GM12878 (cell line): ENCODE measurements at regions of chr7 and their contacts with region 1.

Region 1: DNA sequence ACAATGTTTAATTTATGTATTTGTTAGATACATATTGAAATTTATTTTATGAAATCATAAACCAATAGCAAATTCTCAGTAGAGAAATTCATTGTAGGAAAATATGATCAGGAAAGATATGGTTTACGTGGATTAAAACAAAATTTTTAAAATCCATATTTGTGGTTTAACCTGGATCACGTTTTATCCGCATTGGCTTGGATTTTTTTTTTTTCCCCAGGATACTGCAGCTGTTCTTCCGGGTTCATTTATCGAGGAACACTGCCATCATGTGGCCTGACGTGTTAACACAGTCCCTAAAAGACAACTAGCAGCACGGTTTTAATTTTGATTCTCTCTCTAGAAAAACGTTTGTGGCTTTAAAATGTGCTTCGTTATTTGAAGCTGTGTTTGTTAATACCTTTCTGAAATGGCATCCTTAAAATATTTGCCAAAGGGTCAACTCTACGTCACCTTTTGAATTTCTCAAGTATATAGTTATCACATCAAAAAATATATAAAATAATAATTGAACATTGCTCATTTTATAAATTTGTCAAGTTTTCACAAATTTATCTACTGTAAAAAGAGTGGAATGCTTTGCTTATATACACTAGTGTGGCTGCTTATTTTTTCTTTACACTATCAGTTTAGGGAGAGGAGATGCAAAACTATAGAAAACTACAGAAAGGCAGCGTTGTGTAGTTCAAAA is 8.7 kb upstream of the ASB4 start:
- DNase-seq: peak; percentile 28
- ATAC-seq: peak; percentile 73
- H3K4me3 ChIP-seq: no peak overlapping the region
- H3K27ac ChIP-seq: no peak overlapping the region
- H3K4me1 ChIP-seq: peaks cover 4% of the 10 kb centered on the region
- H3K27me3 ChIP-seq: no peaks in the 10 kb centered on the region
- CTCF ChIP-seq: peak; percentile 69 to 86 (median 74)
- EP300 ChIP-seq: no peak
- POLR2A ChIP-seq: no peak
- RAD21 ChIP-seq: peak; percentile 94

Region 2: DNA sequence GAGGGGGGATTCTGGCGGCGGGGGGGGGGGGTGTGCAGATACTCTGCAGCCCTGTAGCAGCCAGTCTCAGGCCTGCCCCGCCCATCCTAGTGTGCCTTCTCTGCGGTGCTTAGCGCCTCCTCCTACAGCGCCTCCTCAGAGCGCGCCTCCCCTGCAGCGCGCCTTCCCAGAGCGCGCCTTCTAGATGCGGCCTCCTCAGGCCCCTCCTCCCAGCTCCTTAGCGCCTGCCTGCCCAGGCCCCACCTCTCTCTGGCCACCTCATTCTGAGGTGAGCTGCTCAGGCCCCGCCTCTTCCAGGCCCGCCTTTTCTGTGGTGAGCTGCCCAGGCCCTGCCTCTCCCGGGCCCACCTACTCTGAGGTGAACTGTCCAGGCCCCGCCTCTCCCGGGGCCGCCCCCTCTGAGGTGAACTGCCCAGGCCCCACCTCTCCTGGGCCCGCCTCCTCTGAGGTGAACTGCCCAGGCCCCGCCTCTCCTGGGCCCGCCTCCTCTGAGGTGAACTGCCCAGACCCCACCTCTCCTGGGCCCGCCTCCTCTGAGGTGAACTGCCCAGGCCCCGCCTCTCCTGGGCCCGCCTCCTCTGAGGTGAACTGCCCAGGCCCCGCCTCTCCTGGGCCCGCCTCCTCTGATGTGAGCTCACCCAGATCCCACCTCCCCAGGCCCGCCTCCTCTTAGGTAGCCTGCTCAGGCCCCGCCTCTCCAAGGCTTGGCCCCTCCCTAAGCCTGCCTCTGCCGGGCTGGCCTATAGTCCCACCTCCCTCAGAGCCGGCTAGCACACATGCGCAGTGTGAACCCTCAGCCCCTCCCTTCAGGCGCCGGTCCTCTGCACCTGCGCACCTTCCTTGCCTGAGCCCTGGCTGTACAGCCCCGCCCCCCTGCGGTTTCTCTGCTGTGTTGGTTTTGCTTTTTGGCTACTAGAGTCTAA is 819.0 kb before region 1 on chr7:
- CTCF ChIA-PET with region 1: interaction called, 6 read pairs
- POLR2A ChIA-PET with region 1: no interaction called
- RAD21 ChIA-PET with region 1: interaction called, 14 read pairs
- SMC1A ChIA-PET with region 1: interaction called, 10 read pairs
- in situ Hi-C with region 1: no loop called
- intact Hi-C with region 1: loop called (anchors 10 kb)
- DNase-seq: peak; percentile 83
- ATAC-seq: peak; percentile 88
- H3K4me3 ChIP-seq: no peak overlapping the region
- H3K27ac ChIP-seq: no peak overlapping the region
- H3K4me1 ChIP-seq: no peaks in the 10 kb centered on the region; the same call in 1 of the 2 replicates
- H3K27me3 ChIP-seq: no peaks in the 10 kb centered on the region
- CTCF ChIP-seq: peak in 1 of 3 experiments; percentile 16; a peak in 1 of 6 replicates
- EP300 ChIP-seq: no peak
- POLR2A ChIP-seq: peak; percentile 56; the same call in 1 of the 2 replicates
- RAD21 ChIP-seq: no peak

Region 3: DNA sequence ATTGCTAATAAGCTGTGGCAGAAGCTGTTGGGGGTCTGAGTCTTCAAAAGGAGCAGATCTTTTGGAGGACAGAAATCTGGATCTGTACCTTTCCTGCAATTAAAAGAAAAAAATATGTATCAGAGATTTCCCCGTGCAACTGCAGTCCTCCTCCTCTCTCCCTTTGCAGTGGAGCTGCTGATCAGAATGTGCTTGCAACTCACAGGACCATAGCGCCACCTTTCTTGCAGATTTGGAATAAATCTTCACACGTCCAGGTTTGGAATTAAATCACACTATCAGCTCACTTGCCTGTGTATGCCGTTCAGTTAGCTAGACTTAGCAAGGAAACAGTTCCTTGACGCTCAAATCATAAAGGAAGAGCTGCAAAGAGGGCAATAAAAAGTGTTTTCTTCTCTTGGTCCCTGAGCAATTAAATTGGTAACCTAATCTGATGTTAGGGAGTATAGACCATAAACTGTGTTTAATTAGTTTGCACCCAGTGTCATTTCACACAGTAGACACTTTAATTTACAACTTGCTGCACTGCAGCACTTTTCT is 230.1 kb before region 1 on chr7:
- CTCF ChIA-PET with region 1: interaction called, 36 read pairs
- POLR2A ChIA-PET with region 1: no interaction called
- RAD21 ChIA-PET with region 1: interaction called, 38 read pairs
- SMC1A ChIA-PET with region 1: interaction called, 56 read pairs
- in situ Hi-C with region 1: no loop called
- intact Hi-C with region 1: no loop called
- DNase-seq: peak; percentile 5
- ATAC-seq: peak; percentile 91
- H3K4me3 ChIP-seq: no peak overlapping the region
- H3K27ac ChIP-seq: no peak overlapping the region
- H3K4me1 ChIP-seq: no peaks in the 10 kb centered on the region
- H3K27me3 ChIP-seq: no peaks in the 10 kb centered on the region
- CTCF ChIP-seq: peak; percentile 57 to 75 (median 65)
- EP300 ChIP-seq: no peak
- POLR2A ChIP-seq: no peak
- RAD21 ChIP-seq: peak; percentile 82

Region 4: GRCh38 chr7:95357623-95358022 is 119.4 kb before region 1 on chr7:
- CTCF ChIA-PET with region 1: interaction called, 14 read pairs
- POLR2A ChIA-PET with region 1: no interaction called
- RAD21 ChIA-PET with region 1: interaction called, 6 read pairs
- SMC1A ChIA-PET with region 1: interaction called, 5 read pairs
- in situ Hi-C with region 1: no loop called
- intact Hi-C with region 1: no loop called
- DNase-seq: no peak
- ATAC-seq: no peak
- H3K4me3 ChIP-seq: no peak overlapping the region
- H3K27ac ChIP-seq: no peak overlapping the region
- H3K4me1 ChIP-seq: no peaks in the 10 kb centered on the region
- H3K27me3 ChIP-seq: no peaks in the 10 kb centered on the region
- CTCF ChIP-seq: 0 out of 6 replicates have a peak, but pooled peaks of 1 of the 3 experiments have one; percentile 7
- EP300 ChIP-seq: no peak
- POLR2A ChIP-seq: no peak
- RAD21 ChIP-seq: peak; percentile 25; the same call in 1 of the 2 replicates

Region 5: GRCh38 chr7:95427166-95427565 is 49.9 kb before region 1 on chr7:
- CTCF ChIA-PET with region 1: interaction called, 50 read pairs
- POLR2A ChIA-PET with region 1: interaction called, 4 read pairs
- RAD21 ChIA-PET with region 1: interaction called, 33 read pairs
- SMC1A ChIA-PET with region 1: interaction called, 81 read pairs
- in situ Hi-C with region 1: no loop called
- intact Hi-C with region 1: no loop called
- DNase-seq: no peak
- ATAC-seq: no peak
- H3K4me3 ChIP-seq: no peak overlapping the region
- H3K27ac ChIP-seq: no peak overlapping the region
- H3K4me1 ChIP-seq: no peaks in the 10 kb centered on the region
- H3K27me3 ChIP-seq: no peaks in the 10 kb centered on the region
- CTCF ChIP-seq: no peak
- EP300 ChIP-seq: no peak
- POLR2A ChIP-seq: no peak
- RAD21 ChIP-seq: no peak

Region 6: DNA sequence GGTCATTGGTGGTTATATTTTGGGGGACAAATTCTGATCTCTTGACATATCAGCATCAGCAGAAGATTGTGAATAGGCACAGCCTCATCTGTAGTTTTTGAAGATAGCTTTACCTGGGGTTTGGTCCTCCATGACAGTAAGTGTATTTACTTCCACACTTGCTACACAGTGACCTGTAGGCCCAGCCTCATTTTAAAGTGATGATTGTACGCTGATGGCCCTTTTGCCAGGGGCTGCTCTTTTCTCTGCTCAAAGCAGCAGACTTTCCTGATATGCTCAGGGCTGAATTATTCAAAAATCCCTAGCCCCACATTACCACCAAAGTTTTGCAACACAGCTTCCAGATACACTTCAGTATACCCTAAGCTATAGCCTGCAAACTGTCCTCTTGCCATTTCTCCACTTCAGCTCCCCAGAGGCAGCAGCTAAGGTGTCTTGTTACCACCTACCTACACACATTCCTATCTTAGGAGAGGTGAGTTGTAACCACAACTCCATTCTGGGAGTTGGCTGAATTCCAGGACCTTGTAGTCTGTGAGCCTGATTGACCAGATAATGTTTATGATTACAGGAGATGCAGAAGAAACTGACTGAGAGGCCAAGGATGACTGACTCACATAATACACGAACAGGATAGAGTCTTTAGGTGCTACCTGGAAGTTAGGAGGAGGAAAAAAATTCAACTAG is 14.7 kb after region 1 on chr7:
- CTCF ChIA-PET with region 1: interaction called, 136 read pairs
- POLR2A ChIA-PET with region 1: interaction called, 6 read pairs
- RAD21 ChIA-PET with region 1: interaction called, 42 read pairs
- SMC1A ChIA-PET with region 1: interaction called, 203 read pairs
- in situ Hi-C with region 1: no loop called
- intact Hi-C with region 1: no loop called
- DNase-seq: no peak
- ATAC-seq: no peak
- H3K4me3 ChIP-seq: no peak overlapping the region
- H3K27ac ChIP-seq: no peak overlapping the region
- H3K4me1 ChIP-seq: no peaks in the 10 kb centered on the region
- H3K27me3 ChIP-seq: no peaks in the 10 kb centered on the region
- CTCF ChIP-seq: no peak
- EP300 ChIP-seq: no peak
- POLR2A ChIP-seq: no peak
- RAD21 ChIP-seq: no peak

Region 7: DNA sequence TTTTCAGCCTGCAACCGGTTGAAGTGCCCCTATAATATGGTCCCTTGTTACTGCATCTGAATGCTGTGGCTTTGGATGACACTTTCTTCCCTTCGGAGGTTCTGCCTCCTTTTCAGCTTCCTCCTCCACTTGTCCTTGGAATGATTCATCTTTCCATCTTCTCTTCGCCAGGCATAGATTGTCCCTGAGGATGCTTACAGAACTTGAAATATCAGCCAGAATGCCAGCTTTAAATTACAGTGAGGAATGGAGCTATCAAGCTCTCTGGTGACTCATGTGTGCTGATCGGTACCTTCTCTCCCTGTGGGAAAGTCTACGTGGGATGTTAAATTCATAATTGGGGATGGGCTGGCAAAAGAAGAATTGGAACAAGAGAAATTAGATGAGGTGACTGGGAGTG is 165.1 kb after region 1 on chr7:
- CTCF ChIA-PET with region 1: no interaction called
- POLR2A ChIA-PET with region 1: no interaction called
- RAD21 ChIA-PET with region 1: no interaction called
- SMC1A ChIA-PET with region 1: no interaction called
- in situ Hi-C with region 1: no loop called
- intact Hi-C with region 1: no loop called
- DNase-seq: no peak
- ATAC-seq: no peak
- H3K4me3 ChIP-seq: no peak overlapping the region
- H3K27ac ChIP-seq: no peak overlapping the region
- H3K4me1 ChIP-seq: no peaks in the 10 kb centered on the region
- H3K27me3 ChIP-seq: peaks cover 0 to 2% of the 10 kb centered on the region in 2 experiments
- CTCF ChIP-seq: no peak
- EP300 ChIP-seq: no peak
- POLR2A ChIP-seq: no peak
- RAD21 ChIP-seq: no peak

Region 8: GRCh38 chr7:95684037-95684436 is 207.0 kb after region 1 on chr7:
- CTCF ChIA-PET with region 1: interaction called, 57 read pairs
- POLR2A ChIA-PET with region 1: no interaction called
- RAD21 ChIA-PET with region 1: interaction called, 21 read pairs
- SMC1A ChIA-PET with region 1: interaction called, 98 read pairs
- in situ Hi-C with region 1: no loop called
- intact Hi-C with region 1: no loop called
- DNase-seq: no peak
- ATAC-seq: peak; percentile 67
- H3K4me3 ChIP-seq: no peak overlapping the region
- H3K27ac ChIP-seq: no peak overlapping the region
- H3K4me1 ChIP-seq: no peaks in the 10 kb centered on the region
- H3K27me3 ChIP-seq: no peaks in the 10 kb centered on the region; a peak in 1 of 4 replicates
- CTCF ChIP-seq: peak; percentile 21 to 37 (median 26); a peak in 3 of 6 replicates
- EP300 ChIP-seq: no peak
- POLR2A ChIP-seq: no peak
- RAD21 ChIP-seq: peak; percentile 52